ENCODE measurements at regions of chr4 and their contacts with region 1.

Region 1: DNA sequence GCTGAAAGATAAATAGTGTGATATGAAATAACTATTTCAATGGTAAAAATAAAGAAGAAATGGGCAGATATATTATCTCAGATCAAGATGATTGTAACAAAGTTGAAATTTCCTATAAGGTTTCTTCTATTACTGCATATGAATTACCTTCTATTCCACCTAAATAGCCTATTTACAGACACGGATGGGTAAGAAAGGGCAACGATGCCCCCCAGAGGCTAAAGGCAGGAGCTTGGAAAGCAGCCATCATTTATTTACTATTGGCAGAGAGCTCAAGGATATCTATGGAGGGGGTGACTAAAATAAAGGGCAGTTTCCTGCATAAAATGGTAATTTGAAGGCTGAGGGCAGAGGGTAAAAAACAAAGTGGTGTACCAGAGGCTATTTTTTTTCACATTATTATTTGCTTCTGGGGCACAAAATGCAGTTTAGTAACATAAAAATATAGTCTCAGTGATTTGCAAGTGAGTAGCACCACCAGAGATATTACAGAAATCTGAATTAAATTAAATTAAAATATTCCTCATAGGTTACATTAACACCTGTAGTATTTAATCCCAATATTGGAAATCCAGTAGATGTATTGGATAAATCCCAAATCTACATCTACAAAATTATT is 123.1 kb downstream of the BTC start:
- DNase-seq: peak; percentile 86
- H3K4me3 ChIP-seq: no peak overlapping the region
- H3K27ac ChIP-seq: no peak overlapping the region
- H3K4me1 ChIP-seq: no peaks in the 10 kb centered on the region
- H3K27me3 ChIP-seq: no peaks in the 10 kb centered on the region

Region 2: DNA sequence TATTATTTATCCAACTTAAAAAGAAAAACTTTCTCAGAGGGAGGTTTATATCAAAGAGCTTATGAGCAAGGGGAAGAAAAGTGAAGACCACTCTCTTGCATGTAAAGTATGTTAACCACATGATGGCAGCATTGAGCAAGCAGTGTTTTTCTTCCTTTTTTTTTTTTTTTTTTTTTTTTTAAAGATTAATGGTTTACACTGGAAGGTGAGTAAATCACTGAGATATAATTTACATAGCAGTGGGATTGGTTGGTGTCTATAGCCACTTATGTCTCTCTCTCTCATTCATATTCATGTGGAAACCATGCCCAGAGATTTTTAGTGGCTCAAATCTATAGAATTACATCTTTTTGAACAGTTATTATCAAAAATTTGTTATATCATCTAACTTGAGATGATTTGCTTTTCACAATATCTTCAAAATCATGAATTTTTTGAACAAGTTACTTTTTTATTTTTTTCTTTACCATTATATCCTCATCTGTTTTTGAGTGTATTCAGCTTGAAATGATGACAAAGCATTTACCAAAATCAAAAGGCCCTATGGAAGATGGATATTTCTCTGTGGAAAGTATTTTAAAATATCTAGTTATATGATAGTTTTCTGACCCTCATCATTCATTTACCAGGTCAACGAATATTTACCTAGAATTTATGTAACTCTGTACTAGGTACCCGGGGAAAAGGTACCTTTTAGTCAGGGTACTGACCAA is 481.7 kb before region 1 on chr4:
- in situ Hi-C with region 1: loop called (anchors 25 kb)
- DNase-seq: peak; percentile 71
- H3K4me3 ChIP-seq: no peak overlapping the region
- H3K27ac ChIP-seq: no peak overlapping the region
- H3K4me1 ChIP-seq: no peaks in the 10 kb centered on the region
- H3K27me3 ChIP-seq: no peaks in the 10 kb centered on the region

Region 3: DNA sequence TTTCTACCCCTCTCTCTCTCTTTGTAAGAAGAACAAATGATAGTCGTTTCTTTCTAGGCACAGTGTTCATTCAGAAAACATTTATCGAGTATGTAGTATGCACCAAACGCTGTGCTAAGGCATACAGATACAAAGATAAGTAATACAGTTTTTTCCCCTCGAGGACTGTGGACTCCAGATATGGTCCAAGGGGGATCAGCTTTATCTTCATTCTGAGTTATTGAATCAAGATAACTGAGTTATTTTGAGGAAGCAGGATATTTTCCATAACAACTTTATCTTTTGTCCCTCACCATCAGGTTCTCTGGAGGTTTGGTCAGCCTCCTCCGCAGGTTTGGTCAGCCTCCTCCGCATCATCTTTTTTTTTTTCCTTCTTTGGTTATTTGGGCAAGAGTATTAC is 291.3 kb before region 1 on chr4:
- in situ Hi-C with region 1: loop called (anchors 5 kb)
- DNase-seq: no peak
- H3K4me3 ChIP-seq: no peak overlapping the region
- H3K27ac ChIP-seq: no peak overlapping the region
- H3K4me1 ChIP-seq: peaks cover 20% of the 10 kb centered on the region
- H3K27me3 ChIP-seq: no peaks in the 10 kb centered on the region

Region 4: DNA sequence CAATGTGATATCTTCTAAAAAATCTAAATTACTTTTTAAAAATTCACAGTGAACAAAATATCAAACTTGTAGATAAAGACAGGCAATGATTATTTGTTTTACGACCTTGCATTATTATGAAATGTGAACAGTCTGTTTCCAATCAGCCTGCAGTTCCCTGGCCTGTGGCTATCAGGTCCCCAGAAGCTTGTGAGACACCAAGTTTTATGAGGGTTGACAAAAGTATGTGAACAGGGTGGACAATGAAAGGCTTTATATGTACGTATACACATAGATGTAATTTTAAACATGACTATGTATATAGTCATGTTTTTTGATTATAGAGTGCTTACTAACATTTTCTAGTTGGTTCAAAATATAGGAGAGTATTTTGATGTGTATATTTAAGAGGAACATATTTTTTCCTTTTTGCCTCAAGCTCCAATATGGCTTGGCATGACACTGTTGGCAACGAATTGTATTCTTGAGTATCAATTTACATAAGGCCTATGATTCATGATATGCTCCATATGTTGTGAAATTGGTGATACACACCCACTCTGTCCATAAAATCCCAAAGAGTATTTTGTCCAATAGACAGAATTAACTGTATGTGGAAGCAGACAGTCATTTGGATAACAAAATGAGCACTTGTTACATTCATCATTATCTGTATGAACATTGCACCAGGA is 67.4 kb after region 1 on chr4:
- in situ Hi-C with region 1: no loop called
- DNase-seq: peak; percentile 19
- H3K4me3 ChIP-seq: no peak overlapping the region
- H3K27ac ChIP-seq: no peak overlapping the region
- H3K4me1 ChIP-seq: no peaks in the 10 kb centered on the region
- H3K27me3 ChIP-seq: peaks cover 24% of the 10 kb centered on the region; the same call in 1 of the 2 replicates

Region 5: DNA sequence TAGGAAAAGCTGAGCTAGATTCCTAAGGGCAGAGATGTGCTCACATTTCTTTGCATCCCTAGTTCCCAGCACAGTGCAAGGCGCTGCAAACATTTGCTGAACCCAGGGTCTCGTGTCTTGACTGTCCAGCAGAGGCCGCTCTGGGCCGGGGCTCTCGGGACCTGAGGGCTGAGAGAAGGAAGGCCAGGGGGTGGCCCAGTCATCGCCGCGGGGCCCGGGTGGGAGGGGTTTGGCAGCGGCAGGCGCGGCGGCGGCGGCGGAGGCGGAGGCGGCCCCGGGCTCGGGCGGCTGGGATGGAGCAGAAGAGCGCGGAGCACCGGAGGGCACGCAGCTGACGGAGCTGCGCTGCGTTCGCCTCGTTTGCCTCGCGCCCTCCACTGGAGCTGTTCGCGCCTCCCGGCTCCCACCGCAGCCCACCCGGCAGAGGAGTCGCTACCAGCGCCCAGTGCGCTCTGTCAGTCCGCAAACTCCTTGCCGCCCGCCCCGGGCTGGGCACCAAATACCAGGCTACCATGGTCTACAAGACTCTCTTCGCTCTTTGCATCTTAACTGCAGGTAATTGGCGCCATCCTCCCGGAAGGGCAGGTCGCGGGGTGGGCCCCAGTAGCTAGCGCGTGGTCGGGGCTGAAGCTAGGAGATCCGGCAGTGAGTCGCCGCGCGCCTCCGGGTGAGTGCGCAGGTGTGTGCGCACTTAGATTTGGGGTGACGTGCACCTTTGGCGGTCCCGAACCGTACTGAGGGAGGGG is 261.8 kb after region 1 on chr4 and contains the start of gene PARM1:
- in situ Hi-C with region 1: no loop called
- DNase-seq: peak; percentile 76
- H3K4me3 ChIP-seq: peak within 1 kb of the TSS; percentile 67
- H3K27ac ChIP-seq: no peak within 1 kb of the TSS
- H3K4me1 ChIP-seq: no peaks in the 10 kb centered on the region; the same call in none of the 2 replicates
- H3K27me3 ChIP-seq: peaks cover 69% of the 10 kb centered on the region
- total RNA-seq, gene PARM1: under 0.01 TPM in 1 of 2 replicates, not detected in the other

Region 6: GRCh38 chr4:74969507-74970474 is 298.6 kb after region 1 on chr4:
- in situ Hi-C with region 1: no loop called
- DNase-seq: no peak
- H3K4me3 ChIP-seq: no peak overlapping the region
- H3K27ac ChIP-seq: no peak overlapping the region
- H3K4me1 ChIP-seq: no peaks in the 10 kb centered on the region
- H3K27me3 ChIP-seq: no peaks in the 10 kb centered on the region

Measured in GM23248 (cell line).